Activated CD4-positive, alpha-beta T cell treated with anti-CD3 and anti-CD28 coated beads for 36 hours (primary cell): ENCODE measurements at regions of chr11 and their contacts with region 1.

Region 1: DNA sequence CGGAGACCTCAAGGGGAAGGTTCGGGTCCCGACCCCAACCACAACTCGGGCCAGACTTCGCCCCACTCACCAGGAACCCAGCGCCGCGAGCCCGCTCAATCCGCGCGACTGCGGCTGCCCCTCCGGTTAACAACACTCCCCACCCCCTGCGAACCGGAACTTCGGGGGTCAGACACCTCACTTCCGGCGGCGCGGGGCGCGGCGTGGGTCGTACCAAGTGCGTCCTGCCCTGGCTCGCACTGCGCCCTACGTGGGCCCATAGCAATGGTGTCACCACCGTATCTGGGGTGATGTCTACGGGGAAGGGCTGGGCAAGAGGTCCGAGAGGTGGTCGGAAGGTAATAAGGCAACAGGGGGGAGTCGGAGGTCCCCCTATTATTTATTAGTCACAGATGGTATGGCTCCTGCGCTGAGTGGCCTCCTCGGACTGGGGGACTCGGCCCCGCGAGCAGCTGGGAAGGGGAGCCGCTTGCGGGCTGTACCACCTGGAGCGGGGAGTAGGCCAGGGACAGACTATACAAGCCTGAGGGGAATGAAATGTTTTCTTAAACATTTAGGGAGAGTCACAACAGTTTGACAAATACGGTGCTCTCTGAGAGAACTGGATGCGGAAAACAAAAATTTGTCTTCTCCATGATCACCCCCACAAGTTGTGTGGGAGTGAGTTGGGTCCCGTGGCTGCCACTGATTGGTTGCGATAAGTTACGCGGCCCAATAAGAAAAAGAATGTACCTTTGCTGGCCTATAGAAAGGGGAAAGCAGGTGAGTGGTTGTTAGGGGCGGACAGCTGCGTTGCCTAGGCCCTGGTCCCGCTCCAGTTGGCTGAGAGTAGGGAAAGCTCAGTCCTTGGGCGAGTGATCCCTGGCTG is at the start of gene SYVN1:
- DNase-seq: peak; percentile 95
- ATAC-seq: peak; percentile 91
- H3K4me3 Mint-ChIP-seq: peak within 1 kb of the TSS; percentile 97
- H3K27ac Mint-ChIP-seq: peak within 1 kb of the TSS; percentile 97
- H3K4me1 Mint-ChIP-seq: peaks cover 27% of the 10 kb centered on the region
- H3K27me3 Mint-ChIP-seq: no peaks in the 10 kb centered on the region
- total RNA-seq, gene SYVN1: 24.3 to 31.1 TPM

Region 2: GRCh38 chr11:65027213-65028067 is 107.2 kb before region 1 on chr11 and contains the start of gene SNX15:
- CTCF ChIA-PET with region 1: no interaction called
- POLR2A ChIA-PET with region 1: no interaction called
- intact Hi-C with region 1: loop called in 1 of 2 experiments (anchors 1 kb)
- DNase-seq: peak; percentile 94
- ATAC-seq: peak; percentile 91
- H3K4me3 Mint-ChIP-seq: peak within 1 kb of the TSS; percentile 73
- H3K27ac Mint-ChIP-seq: peak within 1 kb of the TSS; percentile 86
- H3K4me1 Mint-ChIP-seq: peaks cover 21% of the 10 kb centered on the region
- H3K27me3 Mint-ChIP-seq: no peaks in the 10 kb centered on the region
- total RNA-seq, gene SNX15: 12.1 to 14.2 TPM

Region 3: GRCh38 chr11:65111744-65112414 is 22.7 kb before region 1 on chr11 and contains the start of gene TM7SF2:
- CTCF ChIA-PET with region 1: interaction called, 10 read pairs
- POLR2A ChIA-PET with region 1: interaction called, 3 read pairs
- intact Hi-C with region 1: loop called in 1 of 2 experiments (anchors 1 kb)
- DNase-seq: peak; percentile 98
- ATAC-seq: peak; percentile 78
- H3K4me3 Mint-ChIP-seq: peak within 1 kb of the TSS; percentile 83
- H3K27ac Mint-ChIP-seq: peak within 1 kb of the TSS; percentile 74
- H3K4me1 Mint-ChIP-seq: peaks cover 50% of the 10 kb centered on the region
- H3K27me3 Mint-ChIP-seq: no peaks in the 10 kb centered on the region
- total RNA-seq, gene TM7SF2: 17.4 to 18.1 TPM

Region 4: DNA sequence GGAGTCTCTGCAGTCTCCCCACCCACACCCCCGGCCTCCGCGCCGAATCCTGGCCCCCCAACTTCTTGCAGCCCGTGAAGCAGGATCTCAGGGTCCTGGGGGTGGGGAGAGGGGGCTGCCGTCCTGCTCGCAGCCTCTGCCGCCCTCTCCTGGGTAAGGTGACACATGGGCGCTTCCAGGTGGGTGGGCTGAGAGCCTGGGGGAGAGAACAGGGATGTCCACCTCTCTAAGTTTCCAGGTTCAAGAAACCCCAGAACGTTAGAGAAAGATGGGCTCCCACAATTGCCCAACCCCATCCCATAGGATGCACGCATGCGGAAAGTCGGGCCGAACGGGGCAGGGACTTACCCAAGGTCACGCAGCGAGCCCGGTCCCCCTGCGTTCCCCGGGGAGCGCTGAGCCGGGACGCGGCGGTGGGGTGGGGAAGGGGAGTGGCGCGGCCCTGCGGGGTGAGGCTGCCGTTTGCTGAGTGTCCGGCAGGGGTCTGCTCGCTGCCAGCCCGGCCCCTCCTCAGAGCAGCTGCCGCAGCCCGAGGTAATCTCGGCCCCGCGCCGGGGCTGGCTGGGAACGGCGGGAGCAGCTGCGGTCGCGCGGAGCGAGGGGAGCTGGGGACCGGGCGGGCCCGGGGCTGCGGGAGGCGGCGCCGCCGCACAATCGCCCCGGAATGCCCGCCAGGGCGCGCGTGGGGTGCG is 46.4 kb after region 1 on chr11:
- CTCF ChIA-PET with region 1: interaction called, 8 read pairs
- POLR2A ChIA-PET with region 1: interaction called, 10 read pairs
- intact Hi-C with region 1: loop called (anchors 1 to 2 kb)
- DNase-seq: peak; percentile 79
- ATAC-seq: peak; percentile 74
- H3K4me3 Mint-ChIP-seq: peak overlapping the region; percentile 79
- H3K27ac Mint-ChIP-seq: peak overlapping the region; percentile 80
- H3K4me1 Mint-ChIP-seq: peaks cover 14% of the 10 kb centered on the region
- H3K27me3 Mint-ChIP-seq: no peaks in the 10 kb centered on the region